ENCODE measurements at regions of chr9 and their contacts with region 1.

Region 1: GRCh38 chr9:82234160-82234943 is 245.8 kb downstream of the SPATA31D1 start:
- DNase-seq: no peak
- H3K4me3 Mint-ChIP-seq: no peak overlapping the region
- H3K27ac Mint-ChIP-seq: no peak overlapping the region
- H3K4me1 Mint-ChIP-seq: no peaks in the 10 kb centered on the region
- H3K27me3 Mint-ChIP-seq: no peaks in the 10 kb centered on the region
- CTCF ChIP-seq: no peak

Region 2: DNA sequence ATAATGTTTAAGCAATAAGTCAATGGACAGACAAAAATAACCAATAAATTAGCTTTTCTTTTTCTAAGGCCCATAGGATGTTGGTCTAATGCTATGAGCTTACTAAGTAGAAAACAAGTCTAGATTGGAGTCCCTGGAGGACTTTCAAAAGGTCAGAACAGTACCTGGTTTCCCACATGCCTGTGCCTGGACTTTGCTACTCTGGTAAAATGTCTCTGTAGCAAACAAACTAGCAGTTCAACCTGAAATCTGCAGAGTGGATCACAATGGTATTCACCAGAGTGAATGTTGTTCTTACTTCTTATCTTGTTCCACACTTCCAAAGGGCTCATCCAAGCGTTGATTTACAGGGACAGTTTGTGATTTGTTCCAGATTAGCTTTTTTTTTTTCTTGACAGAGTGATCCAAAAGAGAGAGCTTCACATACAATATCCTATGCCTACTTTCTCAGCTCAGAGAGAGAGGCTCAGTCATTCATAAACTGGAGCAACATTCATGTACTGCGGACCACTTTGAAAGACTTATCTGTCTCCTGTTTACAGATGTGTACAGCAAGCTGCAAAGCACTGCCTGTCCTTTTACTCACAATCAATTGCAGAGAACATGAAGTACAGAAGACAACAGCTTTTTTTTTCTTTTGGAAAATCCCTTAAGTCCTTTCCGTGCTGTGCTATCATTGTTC is 220.3 kb after region 1 on chr9:
- CTCF ChIA-PET with region 1: no interaction called
- POLR2A ChIA-PET with region 1: no interaction called
- intact Hi-C with region 1: loop called (anchors 5 kb)
- DNase-seq: no peak
- H3K4me3 Mint-ChIP-seq: no peak overlapping the region
- H3K27ac Mint-ChIP-seq: no peak overlapping the region
- H3K4me1 Mint-ChIP-seq: peaks cover 6% of the 10 kb centered on the region
- H3K27me3 Mint-ChIP-seq: no peaks in the 10 kb centered on the region
- CTCF ChIP-seq: no peak

Measured in MCF 10A (cell line).